GM12878 (cell line): ENCODE measurements at regions of chr4 and their contacts with region 1.

Region 1: GRCh38 chr4:113547487-113548042 is 214.0 kb downstream of the CAMK2D start:
- DNase-seq: peak; percentile 97
- ATAC-seq: peak; percentile 98
- H3K4me3 ChIP-seq: no peak overlapping the region
- H3K27ac ChIP-seq: peak overlapping the region; percentile 18; the same call in 1 of the 2 replicates
- H3K4me1 ChIP-seq: peaks cover 9% of the 10 kb centered on the region
- H3K27me3 ChIP-seq: no peaks in the 10 kb centered on the region
- CTCF ChIP-seq: peak; percentile 96 to 99 (median 98); a peak in 5 of 6 replicates
- EP300 ChIP-seq: peak in 1 of 2 experiments; percentile 94; a peak in 2 of 4 replicates
- POLR2A ChIP-seq: no peak
- RAD21 ChIP-seq: peak; percentile 91

Region 2: DNA sequence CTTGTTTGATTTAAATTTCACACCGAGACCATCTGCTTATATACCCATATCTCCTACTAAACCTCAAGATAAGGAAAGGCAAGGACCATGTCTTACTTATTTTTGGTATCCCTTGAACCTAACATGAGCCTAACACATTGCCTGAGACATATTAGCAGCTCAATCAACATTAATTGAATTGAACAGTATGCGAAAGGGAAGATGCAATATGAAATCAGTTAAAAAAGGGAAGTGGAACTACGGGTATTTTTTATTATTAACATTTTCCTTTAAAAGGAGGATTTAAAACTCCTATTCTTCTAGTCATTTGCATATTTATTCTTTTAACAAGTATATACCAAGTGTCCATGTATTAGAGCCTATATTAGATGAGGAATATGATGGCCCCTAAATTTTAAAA is 16.9 kb after region 1 on chr4:
- CTCF ChIA-PET with region 1: interaction called, 85 read pairs
- POLR2A ChIA-PET with region 1: interaction called, 21 read pairs
- RAD21 ChIA-PET with region 1: interaction called, 95 read pairs
- SMC1A ChIA-PET with region 1: interaction called, 168 read pairs
- in situ Hi-C with region 1: no loop called
- intact Hi-C with region 1: loop called (anchors 2 kb)
- DNase-seq: no peak
- ATAC-seq: peak; percentile 45
- H3K4me3 ChIP-seq: peak overlapping the region; percentile 12; the same call in 1 of the 2 replicates
- H3K27ac ChIP-seq: peak overlapping the region; percentile 60
- H3K4me1 ChIP-seq: peaks cover 38% of the 10 kb centered on the region
- H3K27me3 ChIP-seq: no peaks in the 10 kb centered on the region
- CTCF ChIP-seq: no peak
- EP300 ChIP-seq: no peak
- POLR2A ChIP-seq: no peak
- RAD21 ChIP-seq: no peak

Region 3: GRCh38 chr4:113618205-113618604 is 70.6 kb after region 1 on chr4:
- CTCF ChIA-PET with region 1: interaction called, 24 read pairs
- POLR2A ChIA-PET with region 1: no interaction called
- RAD21 ChIA-PET with region 1: interaction called, 12 read pairs
- SMC1A ChIA-PET with region 1: interaction called, 17 read pairs
- in situ Hi-C with region 1: no loop called
- intact Hi-C with region 1: loop called (anchors 5 kb)
- DNase-seq: no peak
- ATAC-seq: peak; percentile 63
- H3K4me3 ChIP-seq: no peak overlapping the region
- H3K27ac ChIP-seq: no peak overlapping the region
- H3K4me1 ChIP-seq: peaks cover 4% of the 10 kb centered on the region; the same call in 1 of the 2 replicates
- H3K27me3 ChIP-seq: no peaks in the 10 kb centered on the region
- CTCF ChIP-seq: no peak
- EP300 ChIP-seq: peak; percentile 78 to 80; a peak in 3 of 4 replicates
- POLR2A ChIP-seq: no peak
- RAD21 ChIP-seq: no peak

Region 4: DNA sequence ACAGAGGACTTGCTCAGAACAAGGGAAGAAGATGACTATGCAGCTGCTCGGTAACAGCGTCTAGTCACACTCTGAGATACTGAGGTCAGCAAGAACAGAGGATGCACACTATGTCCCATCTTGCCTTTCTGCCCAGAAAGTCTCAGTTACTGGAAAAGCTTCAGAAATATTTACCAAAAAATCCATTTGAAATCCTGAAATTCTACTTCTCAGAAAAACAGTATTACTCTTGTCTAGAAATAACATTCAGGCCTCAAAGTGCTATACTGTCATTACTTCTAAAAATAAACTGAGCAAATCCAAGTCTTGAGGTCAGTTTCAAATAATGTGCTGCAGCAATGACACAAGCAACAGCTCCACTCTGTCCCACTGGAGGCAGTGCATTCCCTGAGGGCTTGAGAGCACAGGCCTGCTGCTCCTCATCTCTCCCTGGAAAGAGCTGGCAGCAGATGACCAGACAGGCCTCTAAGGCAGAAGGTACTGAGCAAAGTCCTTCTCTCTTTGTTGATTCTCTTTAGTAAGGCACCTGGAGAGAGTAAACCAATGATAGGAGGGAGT is 137.0 kb after region 1 on chr4:
- CTCF ChIA-PET with region 1: interaction called, 7 read pairs
- POLR2A ChIA-PET with region 1: no interaction called
- RAD21 ChIA-PET with region 1: interaction called, 3 read pairs
- SMC1A ChIA-PET with region 1: interaction called, 9 read pairs
- in situ Hi-C with region 1: no loop called
- intact Hi-C with region 1: loop called (anchors 5 kb)
- DNase-seq: no peak
- ATAC-seq: peak; percentile 10; the same call in 2 of the 3 replicates
- H3K4me3 ChIP-seq: no peak overlapping the region
- H3K27ac ChIP-seq: no peak overlapping the region
- H3K4me1 ChIP-seq: peaks cover 32% of the 10 kb centered on the region
- H3K27me3 ChIP-seq: no peaks in the 10 kb centered on the region
- CTCF ChIP-seq: 0 out of 6 replicates have a peak, but pooled peaks of 1 of the 3 experiments have one; percentile 0
- EP300 ChIP-seq: no peak
- POLR2A ChIP-seq: no peak
- RAD21 ChIP-seq: 0 out of 2 replicates have a peak, but pooled peaks have one; percentile 4

Region 5: GRCh38 chr4:113823291-113823659 is 275.7 kb after region 1 on chr4:
- CTCF ChIA-PET with region 1: no interaction called
- POLR2A ChIA-PET with region 1: no interaction called
- RAD21 ChIA-PET with region 1: interaction called, 4 read pairs
- SMC1A ChIA-PET with region 1: no interaction called
- in situ Hi-C with region 1: no loop called
- intact Hi-C with region 1: loop called (anchors 5 kb)
- DNase-seq: peak; percentile 85
- ATAC-seq: peak; percentile 84
- H3K4me3 ChIP-seq: peak overlapping the region; percentile 13; the same call in 1 of the 2 replicates
- H3K27ac ChIP-seq: peak overlapping the region; percentile 95
- H3K4me1 ChIP-seq: peaks cover 43% of the 10 kb centered on the region
- H3K27me3 ChIP-seq: no peaks in the 10 kb centered on the region
- CTCF ChIP-seq: no peak
- EP300 ChIP-seq: peak; percentile 54 to 88
- POLR2A ChIP-seq: no peak
- RAD21 ChIP-seq: no peak

Region 6: DNA sequence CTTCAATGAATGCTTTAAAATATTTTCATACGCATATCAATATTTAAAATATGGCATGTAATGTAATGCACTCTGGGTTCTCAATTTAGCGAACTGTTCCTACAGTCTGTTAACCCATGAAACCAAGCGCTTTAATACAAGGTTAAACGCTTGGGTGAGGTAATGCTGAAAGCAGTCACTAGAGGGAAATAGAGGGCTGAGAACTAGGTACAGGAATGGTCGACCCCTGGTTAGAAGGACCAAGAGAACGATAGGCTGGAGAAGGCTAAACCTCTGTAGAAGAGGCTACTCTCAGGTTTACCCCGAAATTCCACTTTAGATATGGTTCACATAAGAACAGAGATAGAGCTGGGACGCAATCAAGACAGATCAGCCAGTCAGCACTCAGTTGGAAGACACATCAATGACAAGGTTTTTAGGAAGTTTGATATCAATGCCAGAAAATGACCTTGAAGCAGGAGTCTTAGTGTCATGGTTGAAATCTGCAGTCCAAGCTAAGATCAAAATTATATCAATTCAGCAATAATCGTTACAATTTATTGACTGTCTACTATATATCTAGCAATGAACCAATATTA is 405.0 kb after region 1 on chr4:
- CTCF ChIA-PET with region 1: interaction called, 3 read pairs
- POLR2A ChIA-PET with region 1: no interaction called
- RAD21 ChIA-PET with region 1: interaction called, 4 read pairs
- SMC1A ChIA-PET with region 1: no interaction called
- in situ Hi-C with region 1: no loop called
- intact Hi-C with region 1: loop called (anchors 5 kb)
- DNase-seq: peak; percentile 12
- ATAC-seq: peak; percentile 94
- H3K4me3 ChIP-seq: no peak overlapping the region
- H3K27ac ChIP-seq: no peak overlapping the region
- H3K4me1 ChIP-seq: no peaks in the 10 kb centered on the region
- H3K27me3 ChIP-seq: no peaks in the 10 kb centered on the region
- CTCF ChIP-seq: peak; percentile 69 to 84 (median 71)
- EP300 ChIP-seq: no peak
- POLR2A ChIP-seq: no peak
- RAD21 ChIP-seq: peak; percentile 85